ENCODE measurements at regions of chr9 and their contacts with region 1.

Region 1: DNA sequence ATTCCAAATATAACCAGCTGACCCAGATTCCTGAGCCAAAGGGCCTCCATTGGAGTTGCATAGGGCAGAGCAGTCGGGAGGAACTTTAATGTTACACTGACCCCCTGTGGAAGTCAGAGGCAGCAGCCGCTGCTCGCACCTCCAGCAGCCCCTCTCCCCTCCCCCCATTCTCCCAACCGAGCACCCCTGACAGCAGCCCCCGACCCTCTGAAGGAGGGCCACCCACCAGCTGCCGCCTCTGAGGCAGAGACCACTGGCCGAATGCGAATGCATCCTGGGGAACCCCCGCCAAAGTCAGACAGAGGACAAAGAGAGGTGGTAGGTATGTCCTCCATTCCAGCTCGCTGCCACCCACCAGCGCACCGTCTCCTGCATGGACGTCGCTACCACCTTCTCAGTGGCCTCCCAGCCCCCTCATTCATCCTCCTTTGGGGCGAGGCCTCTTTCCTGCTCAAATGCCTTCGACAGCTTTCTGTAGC is 231.0 kb downstream of the CDK5RAP2 start:
- DNase-seq: peak; percentile 49
- ATAC-seq: peak; percentile 90
- H3K4me3 ChIP-seq: no peak overlapping the region
- H3K27ac ChIP-seq: no peak overlapping the region
- H3K4me1 ChIP-seq: peaks cover 6% of the 10 kb centered on the region
- H3K27me3 ChIP-seq: no peaks in the 10 kb centered on the region
- CTCF ChIP-seq: peak; percentile 78
- POLR2A ChIP-seq: no peak
- RAD21 ChIP-seq: peak; percentile 83

Region 2: GRCh38 chr9:119556129-119556875 is 792.7 kb before region 1 on chr9:
- CTCF ChIA-PET with region 1: no interaction called
- POLR2A ChIA-PET with region 1: no interaction called
- dilution Hi-C with region 1: no loop called
- in situ Hi-C with region 1: loop called (anchors 10 kb)
- intact Hi-C with region 1: loop called (anchors 1 kb)
- DNase-seq: peak; percentile 18
- ATAC-seq: peak; percentile 93
- H3K4me3 ChIP-seq: peak overlapping the region; percentile 40
- H3K27ac ChIP-seq: no peak overlapping the region
- H3K4me1 ChIP-seq: no peaks in the 10 kb centered on the region
- H3K27me3 ChIP-seq: no peaks in the 10 kb centered on the region
- CTCF ChIP-seq: peak; percentile 86
- POLR2A ChIP-seq: no peak
- RAD21 ChIP-seq: peak; percentile 77

Region 3: DNA sequence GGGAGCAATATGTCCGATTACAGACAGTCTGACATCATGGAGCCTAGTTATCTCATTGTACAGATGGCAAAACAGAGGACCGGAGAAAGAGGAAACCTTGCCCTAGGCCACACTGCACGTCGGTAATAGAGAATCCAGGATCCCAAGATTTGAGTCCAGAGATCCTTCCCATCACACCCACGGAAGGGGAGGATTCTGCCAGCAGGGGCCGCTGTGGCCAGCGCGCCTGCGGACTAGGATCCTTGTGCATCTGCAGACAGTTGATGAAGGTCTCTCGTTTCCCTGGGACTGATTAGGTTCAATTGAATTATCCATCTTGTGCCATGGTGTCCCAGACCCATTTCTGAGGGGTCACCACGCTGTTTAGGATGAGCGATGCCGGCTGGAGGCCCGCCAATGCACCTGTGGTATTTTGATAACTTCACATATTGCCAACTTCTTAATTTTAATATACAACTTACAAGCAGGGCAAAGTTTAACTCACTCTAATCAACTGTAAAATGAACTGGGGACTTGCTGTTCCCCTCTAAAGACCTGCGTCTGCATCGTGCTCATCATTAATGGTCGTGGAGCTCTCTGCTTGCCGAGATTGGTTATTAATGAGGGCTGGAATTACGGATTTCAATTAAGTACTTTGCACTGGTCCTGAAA is 387.1 kb before region 1 on chr9:
- CTCF ChIA-PET with region 1: no interaction called
- POLR2A ChIA-PET with region 1: no interaction called
- dilution Hi-C with region 1: no loop called
- in situ Hi-C with region 1: loop called (anchors 10 kb)
- intact Hi-C with region 1: loop called (anchors 2 kb)
- DNase-seq: peak; percentile 29
- ATAC-seq: 0 out of 2 replicates have a peak, but pooled peaks have one; percentile 21
- H3K4me3 ChIP-seq: no peak overlapping the region
- H3K27ac ChIP-seq: no peak overlapping the region
- H3K4me1 ChIP-seq: peaks cover 5% of the 10 kb centered on the region
- H3K27me3 ChIP-seq: no peaks in the 10 kb centered on the region
- CTCF ChIP-seq: peak; percentile 60
- POLR2A ChIP-seq: no peak
- RAD21 ChIP-seq: peak; percentile 53

Region 4: GRCh38 chr9:119968836-119969707 is 379.9 kb before region 1 on chr9:
- CTCF ChIA-PET with region 1: interaction called, 3 read pairs
- POLR2A ChIA-PET with region 1: no interaction called
- dilution Hi-C with region 1: no loop called
- in situ Hi-C with region 1: loop called (anchors 10 kb)
- intact Hi-C with region 1: no loop called
- DNase-seq: peak; percentile 61
- ATAC-seq: peak; percentile 99
- H3K4me3 ChIP-seq: no peak overlapping the region
- H3K27ac ChIP-seq: no peak overlapping the region
- H3K4me1 ChIP-seq: peaks cover 2% of the 10 kb centered on the region
- H3K27me3 ChIP-seq: no peaks in the 10 kb centered on the region
- CTCF ChIP-seq: peak; percentile 94
- POLR2A ChIP-seq: no peak
- RAD21 ChIP-seq: peak; percentile 87

Region 5: GRCh38 chr9:120091206-120091605 is 257.8 kb before region 1 on chr9:
- CTCF ChIA-PET with region 1: no interaction called
- POLR2A ChIA-PET with region 1: no interaction called
- dilution Hi-C with region 1: no loop called
- in situ Hi-C with region 1: no loop called
- intact Hi-C with region 1: no loop called
- DNase-seq: no peak
- ATAC-seq: no peak
- H3K4me3 ChIP-seq: no peak overlapping the region
- H3K27ac ChIP-seq: no peak overlapping the region
- H3K4me1 ChIP-seq: no peaks in the 10 kb centered on the region
- H3K27me3 ChIP-seq: no peaks in the 10 kb centered on the region
- CTCF ChIP-seq: no peak
- POLR2A ChIP-seq: no peak
- RAD21 ChIP-seq: no peak

Region 6: GRCh38 chr9:120383611-120383998 is 34.6 kb after region 1 on chr9:
- CTCF ChIA-PET with region 1: no interaction called
- POLR2A ChIA-PET with region 1: no interaction called
- dilution Hi-C with region 1: no loop called
- in situ Hi-C with region 1: no loop called
- intact Hi-C with region 1: no loop called
- DNase-seq: no peak
- ATAC-seq: no peak
- H3K4me3 ChIP-seq: no peak overlapping the region
- H3K27ac ChIP-seq: no peak overlapping the region
- H3K4me1 ChIP-seq: peaks cover 9% of the 10 kb centered on the region
- H3K27me3 ChIP-seq: no peaks in the 10 kb centered on the region
- CTCF ChIP-seq: no peak
- POLR2A ChIP-seq: no peak
- RAD21 ChIP-seq: no peak

Measured in IMR-90 (cell line).